ENCODE measurements at regions of chr12 and their contacts with region 1.

Region 1: GRCh38 chr12:6697584-6698351 is 2.8 kb downstream of the PIANP start:
- DNase-seq: peak in 1 of 2 experiments; percentile 60
- H3K4me3 ChIP-seq: peak overlapping the region in 1 of 4 experiments; percentile 7; a peak in 2 of 8 replicates
- H3K27ac ChIP-seq: no peak overlapping the region
- H3K4me1 ChIP-seq: peaks cover 0 to 7% (median 4%) of the 10 kb centered on the region in 4 experiments; a peak in 3 of 7 replicates
- H3K27me3 ChIP-seq: peaks cover 0 to 16% (median 14%) of the 10 kb centered on the region in 4 experiments; a peak in 6 of 7 replicates
- CTCF ChIP-seq: peak; percentile 65 to 85 (median 77)
- EP300 ChIP-seq: no peak
- POLR2A ChIP-seq: no peak
- RAD21 ChIP-seq: peak; percentile 80 to 87

Region 2: GRCh38 chr12:6662906-6663742 is 34.6 kb before region 1 on chr12 and contains the start of gene ING4:
- CTCF ChIA-PET with region 1: interaction called, 55 read pairs
- POLR2A ChIA-PET with region 1: interaction called, 13 read pairs
- DNase-seq: peak; percentile 88 to 95
- H3K4me3 ChIP-seq: peak within 1 kb of the TSS; percentile 72 to 90 (median 82)
- H3K27ac ChIP-seq: peak within 1 kb of the TSS; percentile 80
- H3K4me1 ChIP-seq: peaks cover 0 to 4% (median 0%) of the 10 kb centered on the region in 4 experiments; a peak in 1 of 7 replicates
- H3K27me3 ChIP-seq: no peaks in the 10 kb centered on the region
- CTCF ChIP-seq: no peak
- EP300 ChIP-seq: no peak
- POLR2A ChIP-seq: peak in 1 of 2 experiments; percentile 73; a peak in 2 of 3 replicates
- RAD21 ChIP-seq: no peak
- total RNA-seq, gene ING4: 21.7 and 22.9 TPM in 2 replicates

Region 3: DNA sequence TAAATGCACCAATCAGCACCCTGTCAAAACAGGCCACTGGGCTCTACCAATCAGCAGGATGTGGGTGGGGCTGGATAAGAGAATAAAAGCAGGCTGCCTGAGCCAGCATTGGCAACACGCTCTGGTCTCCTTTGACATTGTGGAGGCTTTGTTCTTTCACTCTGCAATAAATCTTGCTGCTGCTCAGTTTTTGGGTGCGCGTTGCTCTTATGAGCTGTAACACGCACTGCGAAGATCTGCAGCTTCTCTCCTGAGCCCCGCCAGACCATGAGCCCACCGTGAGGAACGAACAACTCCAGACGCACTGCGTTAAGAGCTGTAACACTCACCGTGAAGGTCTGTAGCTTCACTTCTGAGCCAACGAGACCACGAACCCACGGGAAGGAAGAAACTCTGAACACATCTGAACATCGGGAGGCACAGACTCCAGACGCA is 11.2 kb after region 1 on chr12:
- CTCF ChIA-PET with region 1: interaction called, 5 read pairs
- POLR2A ChIA-PET with region 1: interaction called, 10 read pairs
- DNase-seq: no peak
- H3K4me3 ChIP-seq: no peak overlapping the region
- H3K27ac ChIP-seq: no peak overlapping the region
- H3K4me1 ChIP-seq: 0 out of 7 replicates have a peak, but pooled peaks cover 0 to under 1% (median 0%) of the 10 kb centered on the region in 4 experiments
- H3K27me3 ChIP-seq: no peaks in the 10 kb centered on the region; a peak in 2 of 7 replicates
- CTCF ChIP-seq: no peak
- EP300 ChIP-seq: no peak
- POLR2A ChIP-seq: no peak
- RAD21 ChIP-seq: no peak

Region 4: DNA sequence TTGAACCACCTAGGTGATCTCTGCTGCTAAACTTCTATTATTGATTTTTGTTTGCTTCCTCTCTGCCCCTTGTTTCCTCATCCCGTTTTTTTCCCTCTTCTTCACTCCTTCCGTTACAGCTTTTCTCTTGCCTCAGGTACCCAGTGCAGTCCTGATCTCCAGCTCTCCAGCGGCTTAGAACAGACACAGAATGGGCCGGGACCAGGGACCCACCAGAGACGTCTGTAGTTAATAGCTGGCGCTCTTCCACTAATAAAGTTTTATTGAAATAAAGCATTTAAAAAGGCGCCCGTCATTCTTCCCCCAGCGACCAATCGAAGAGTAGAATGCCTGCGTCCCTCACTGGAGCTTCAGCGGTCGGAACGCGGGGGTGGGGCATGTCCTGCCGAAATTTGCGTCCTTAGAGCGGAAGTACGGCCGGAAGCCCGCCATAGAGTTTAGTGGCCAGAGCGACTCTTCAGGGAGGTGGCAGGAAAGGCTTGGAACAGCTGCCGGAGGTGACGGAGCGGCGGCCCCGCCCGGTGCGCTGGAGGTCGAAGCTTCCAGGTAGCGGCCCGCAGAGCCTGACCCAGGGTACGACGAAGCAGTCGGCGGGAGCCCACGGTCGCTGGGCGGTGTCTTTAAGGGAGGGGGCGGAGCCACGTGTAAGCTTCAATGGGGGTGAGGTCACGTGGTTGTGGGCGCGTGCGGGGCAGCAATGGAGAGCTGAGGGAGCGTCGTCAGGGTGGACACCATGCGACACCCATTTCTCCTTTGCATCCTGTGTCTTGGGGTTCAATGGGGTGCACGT is 26.0 kb after region 1 on chr12 and contains the start of gene COPS7A:
- CTCF ChIA-PET with region 1: interaction called, 10 read pairs
- POLR2A ChIA-PET with region 1: interaction called, 3 read pairs
- DNase-seq: peak; percentile 95 to 98
- H3K4me3 ChIP-seq: peak within 1 kb of the TSS; percentile 58 to 91 (median 78)
- H3K27ac ChIP-seq: no peak within 1 kb of the TSS; the same call in 1 of the 2 replicates
- H3K4me1 ChIP-seq: peaks cover 0 to 2% (median under 1%) of the 10 kb centered on the region in 4 experiments; a peak in 3 of 7 replicates
- H3K27me3 ChIP-seq: no peaks in the 10 kb centered on the region; a peak in 2 of 7 replicates
- CTCF ChIP-seq: peak in 1 of 3 experiments; percentile 24; a peak in 1 of 4 replicates
- EP300 ChIP-seq: peak; percentile 21 to 63; a peak in 1 of 3 replicates
- POLR2A ChIP-seq: peak in 1 of 2 experiments; percentile 54; a peak in 2 of 3 replicates
- RAD21 ChIP-seq: 0 out of 4 replicates have a peak, but pooled peaks of 1 of the 2 experiments have one; percentile 2
- total RNA-seq, gene COPS7A: 43.3 and 44.5 TPM in 2 replicates